Activated CD4-positive, alpha-beta T cell treated with anti-CD3 and anti-CD28 coated beads, Interleukin-2, amount 10 ng/mL, durations not matched to agents 24 days and 14 days (primary cell): ENCODE measurements at regions of chr16 and their contacts with region 1.

Region 1: DNA sequence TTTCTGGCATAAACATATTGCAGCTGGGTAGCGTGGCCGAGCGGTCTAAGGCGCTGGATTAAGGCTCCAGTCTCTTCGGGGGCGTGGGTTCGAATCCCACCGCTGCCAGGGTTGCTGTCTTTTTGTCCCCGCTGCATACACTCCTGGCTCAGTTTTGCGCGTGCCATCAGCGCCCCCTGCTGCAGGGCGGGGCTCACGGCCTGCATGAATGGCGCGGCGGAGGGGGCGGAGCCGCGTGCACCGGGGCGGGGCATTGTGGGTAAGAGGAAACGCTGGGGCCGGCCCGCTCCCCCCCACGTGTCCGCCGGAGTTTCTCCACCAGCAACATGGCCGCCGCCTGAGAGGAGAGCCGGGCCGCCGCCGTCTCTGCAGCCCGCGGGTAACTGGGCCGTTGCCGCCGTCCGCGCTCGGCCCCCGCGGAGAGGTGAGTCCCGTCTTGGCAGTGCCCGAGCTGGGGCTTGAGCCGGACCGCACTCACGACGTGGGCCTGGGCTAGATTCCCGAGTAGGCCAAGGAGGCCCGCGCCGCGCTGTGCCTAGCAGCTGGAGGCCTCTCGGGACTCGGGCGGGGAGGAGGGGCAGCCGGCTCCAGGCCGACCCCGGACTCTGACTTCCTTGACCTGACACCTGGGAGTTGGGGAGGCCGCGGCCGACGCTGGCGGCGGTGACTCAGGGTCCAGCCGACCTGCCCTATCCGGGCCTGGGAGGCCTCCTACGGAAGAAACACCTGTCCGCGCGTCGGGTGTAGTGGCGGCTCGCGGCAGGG is at the start of gene POLR3E:
- DNase-seq: peak; percentile 100
- H3K4me3 Mint-ChIP-seq: peak within 1 kb of the TSS; percentile 94
- H3K27ac Mint-ChIP-seq: peak within 1 kb of the TSS; percentile 97
- H3K4me1 Mint-ChIP-seq: peaks cover 33% of the 10 kb centered on the region
- H3K27me3 Mint-ChIP-seq: no peaks in the 10 kb centered on the region
- total RNA-seq, gene POLR3E: 102 and 111 TPM in 2 replicates

Region 2: DNA sequence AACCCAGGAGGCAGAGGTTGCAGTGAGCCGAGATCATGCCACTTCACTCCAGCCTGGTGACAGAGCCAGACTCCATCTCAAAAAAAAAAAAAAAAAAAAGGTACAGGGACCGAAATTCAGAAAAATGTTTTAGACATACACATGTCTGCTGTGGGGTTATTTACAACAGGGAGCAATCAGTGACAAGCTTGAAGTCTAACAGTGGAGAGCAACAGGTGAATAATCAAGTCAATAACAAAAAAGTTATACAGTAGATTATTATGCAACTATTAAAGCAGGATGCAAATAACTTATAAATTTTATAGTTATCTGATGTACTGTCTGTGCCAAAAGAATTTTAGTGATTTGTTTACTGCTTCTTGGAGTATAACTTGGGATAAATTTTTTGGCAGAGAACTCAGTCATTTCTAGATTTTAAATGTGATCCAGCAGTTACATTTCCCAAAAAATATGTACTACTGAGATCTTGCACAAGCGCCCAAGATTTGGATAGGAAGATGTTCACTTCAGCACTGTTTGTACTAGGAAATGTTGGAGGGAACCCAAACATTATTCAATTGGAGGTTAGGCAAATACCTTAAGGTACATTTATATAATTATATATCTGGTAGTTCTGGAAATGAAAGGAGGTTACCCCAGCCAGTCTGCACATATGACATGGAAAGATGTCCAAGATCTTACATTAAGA is 57.1 kb before region 1 on chr16:
- intact Hi-C with region 1: loop called (anchors 10 kb)
- DNase-seq: no peak
- H3K4me3 Mint-ChIP-seq: no peak overlapping the region
- H3K27ac Mint-ChIP-seq: peak overlapping the region; percentile 84
- H3K4me1 Mint-ChIP-seq: peaks cover 24% of the 10 kb centered on the region
- H3K27me3 Mint-ChIP-seq: no peaks in the 10 kb centered on the region